ENCODE measurements at regions of chr20 and their contacts with region 1.

Region 1: GRCh38 chr20:4026093-4026601 is 10.8 kb upstream of the RNF24 start:
- DNase-seq: peak in 1 of 2 experiments; percentile 46
- H3K4me3 ChIP-seq: no peak overlapping the region
- H3K27ac ChIP-seq: no peak overlapping the region
- H3K4me1 ChIP-seq: peaks cover 3 to 15% (median 8%) of the 10 kb centered on the region in 4 experiments; a peak in 6 of 7 replicates
- H3K27me3 ChIP-seq: no peaks in the 10 kb centered on the region; a peak in 1 of 7 replicates
- CTCF ChIP-seq: peak; percentile 27 to 69 (median 30); a peak in 3 of 4 replicates
- EP300 ChIP-seq: no peak
- POLR2A ChIP-seq: no peak
- RAD21 ChIP-seq: peak; percentile 54 to 59

Region 2: DNA sequence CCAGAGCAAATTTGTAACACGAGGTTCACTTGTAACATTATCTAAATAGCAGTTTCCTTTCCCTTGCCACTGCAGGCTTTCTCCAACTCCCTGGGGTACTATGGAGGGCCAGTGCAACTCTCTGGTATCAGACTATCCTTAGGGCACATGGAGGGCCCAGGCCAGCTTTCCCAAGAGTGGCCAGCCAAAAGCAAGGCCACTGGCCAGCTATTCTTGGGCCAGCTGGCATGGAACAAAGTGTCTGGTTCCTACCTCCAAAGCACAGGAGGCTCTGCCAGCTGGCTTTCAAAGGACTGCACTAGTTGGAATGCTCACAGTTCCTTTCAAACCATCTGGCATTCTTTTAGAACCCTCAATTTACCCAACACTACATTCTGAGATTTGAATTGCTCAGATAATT is 19.5 kb before region 1 on chr20:
- CTCF ChIA-PET with region 1: interaction called, 12 read pairs
- POLR2A ChIA-PET with region 1: no interaction called
- DNase-seq: no peak
- H3K4me3 ChIP-seq: no peak overlapping the region
- H3K27ac ChIP-seq: no peak overlapping the region
- H3K4me1 ChIP-seq: peaks cover 0 to 3% (median 0%) of the 10 kb centered on the region in 4 experiments; a peak in 1 of 7 replicates
- H3K27me3 ChIP-seq: no peaks in the 10 kb centered on the region
- CTCF ChIP-seq: no peak
- EP300 ChIP-seq: no peak
- POLR2A ChIP-seq: no peak
- RAD21 ChIP-seq: no peak

Region 3: GRCh38 chr20:4014031-4014474 is 12.1 kb before region 1 on chr20:
- CTCF ChIA-PET with region 1: interaction called, 11 read pairs
- POLR2A ChIA-PET with region 1: interaction called, 7 read pairs
- DNase-seq: no peak
- H3K4me3 ChIP-seq: peak overlapping the region; percentile 71 to 84 (median 81); a peak in 6 of 8 replicates
- H3K27ac ChIP-seq: no peak overlapping the region
- H3K4me1 ChIP-seq: peaks cover 5 to 26% (median 18%) of the 10 kb centered on the region in 4 experiments; a peak in 6 of 7 replicates
- H3K27me3 ChIP-seq: no peaks in the 10 kb centered on the region; a peak in 1 of 7 replicates
- CTCF ChIP-seq: peak in 2 of 3 experiments; percentile 25 to 32; a peak in 2 of 4 replicates
- EP300 ChIP-seq: no peak
- POLR2A ChIP-seq: no peak
- RAD21 ChIP-seq: peak; percentile 57 to 61

Region 4: DNA sequence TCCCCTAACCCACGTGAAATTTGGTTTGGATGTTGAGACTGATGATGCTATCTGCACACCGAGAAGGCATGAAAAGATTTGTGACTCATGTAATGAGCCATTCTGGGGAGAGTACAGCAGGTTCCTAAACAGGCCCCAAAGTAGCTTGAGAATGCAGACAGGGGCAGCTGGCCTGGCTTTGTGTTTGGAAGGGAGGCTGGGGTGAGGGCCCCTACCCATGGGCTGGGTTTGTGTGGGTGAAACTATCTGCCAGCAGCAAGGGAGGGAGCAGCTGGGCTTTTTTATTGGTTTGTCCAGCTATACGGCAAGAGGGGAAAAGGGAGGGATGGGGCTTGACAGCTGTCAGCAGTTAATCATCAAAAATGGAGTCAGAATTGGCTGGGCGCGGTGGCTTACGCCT is 76.2 kb after region 1 on chr20:
- CTCF ChIA-PET with region 1: no interaction called
- POLR2A ChIA-PET with region 1: no interaction called
- DNase-seq: peak in 1 of 2 experiments; percentile 31
- H3K4me3 ChIP-seq: no peak overlapping the region
- H3K27ac ChIP-seq: no peak overlapping the region
- H3K4me1 ChIP-seq: no peaks in the 10 kb centered on the region
- H3K27me3 ChIP-seq: no peaks in the 10 kb centered on the region
- CTCF ChIP-seq: no peak
- EP300 ChIP-seq: no peak
- POLR2A ChIP-seq: no peak
- RAD21 ChIP-seq: no peak

Region 5: GRCh38 chr20:4171538-4172116 is 145.5 kb after region 1 on chr20:
- CTCF ChIA-PET with region 1: no interaction called
- POLR2A ChIA-PET with region 1: no interaction called
- DNase-seq: no peak
- H3K4me3 ChIP-seq: peak overlapping the region; percentile 10 to 66 (median 56)
- H3K27ac ChIP-seq: no peak overlapping the region
- H3K4me1 ChIP-seq: peaks cover 5 to 30% (median 25%) of the 10 kb centered on the region in 4 experiments
- H3K27me3 ChIP-seq: peaks cover 0 to 3% (median 0%) of the 10 kb centered on the region in 4 experiments; a peak in 2 of 7 replicates
- CTCF ChIP-seq: no peak
- EP300 ChIP-seq: no peak
- POLR2A ChIP-seq: no peak
- RAD21 ChIP-seq: no peak